Adrenal gland (tissue), 19 donors: ENCODE measurements at regions of chr3 and their contacts with region 1.

Region 1: DNA sequence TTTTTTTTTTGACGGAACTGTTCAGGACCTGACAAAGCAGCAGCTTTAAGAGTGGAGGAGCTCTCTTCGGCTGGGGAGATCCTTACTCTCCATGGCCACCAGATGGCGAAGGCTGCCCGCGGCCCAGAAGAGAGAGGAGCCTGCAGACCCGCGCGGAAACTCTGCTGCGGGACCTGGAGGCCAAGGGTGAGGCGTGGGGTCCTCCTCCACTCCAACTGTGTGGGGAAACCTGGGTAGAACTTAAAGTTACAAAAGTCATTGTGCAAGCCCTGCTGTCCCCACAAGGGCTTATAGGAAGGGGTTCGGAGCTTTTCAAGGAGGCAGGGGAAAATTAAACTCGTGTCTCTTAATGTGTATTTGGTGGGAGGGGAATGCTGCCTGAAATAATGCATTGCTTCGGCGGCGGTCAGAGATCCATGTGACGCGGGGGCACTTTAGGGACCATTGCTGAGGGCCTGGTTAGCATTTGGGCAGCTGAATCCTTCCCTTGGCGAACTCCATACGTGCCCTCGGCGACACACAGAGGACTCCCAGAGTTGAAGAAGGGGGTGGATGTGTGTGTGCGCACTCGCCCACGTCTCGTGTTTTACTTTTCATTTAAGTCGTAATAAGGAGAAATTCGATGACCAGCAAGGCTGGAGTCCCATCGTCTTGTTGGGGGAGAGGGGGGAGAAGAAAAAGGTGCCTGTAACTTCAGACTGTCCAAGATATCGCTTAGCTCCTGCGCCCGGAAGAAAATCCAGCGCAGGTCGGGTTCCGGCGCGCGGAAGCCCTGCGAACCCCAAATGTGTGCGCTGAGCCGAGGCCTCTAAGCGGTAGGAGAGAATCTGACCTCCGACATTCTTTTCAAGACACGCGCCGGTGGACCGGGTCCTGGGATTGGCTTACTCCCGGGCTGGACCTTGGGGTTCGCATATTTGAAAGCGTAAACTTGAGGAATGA is 9.7 kb downstream of the EOMES start:
- DNase-seq: peak; percentile 74 to 86 (median 79)
- H3K4me3 ChIP-seq: peak overlapping the region in 3 of 4 donors; percentile 28 to 59 (median 28)
- H3K27ac ChIP-seq: no peak overlapping the region
- H3K4me1 ChIP-seq: peaks cover 12% of the 10 kb centered on the region in 2 donors
- H3K27me3 ChIP-seq: peaks cover 32% of the 10 kb centered on the region
- CTCF ChIP-seq: peak; percentile 60 to 83 (median 72)
- POLR2A ChIP-seq: no peak

Region 2: DNA sequence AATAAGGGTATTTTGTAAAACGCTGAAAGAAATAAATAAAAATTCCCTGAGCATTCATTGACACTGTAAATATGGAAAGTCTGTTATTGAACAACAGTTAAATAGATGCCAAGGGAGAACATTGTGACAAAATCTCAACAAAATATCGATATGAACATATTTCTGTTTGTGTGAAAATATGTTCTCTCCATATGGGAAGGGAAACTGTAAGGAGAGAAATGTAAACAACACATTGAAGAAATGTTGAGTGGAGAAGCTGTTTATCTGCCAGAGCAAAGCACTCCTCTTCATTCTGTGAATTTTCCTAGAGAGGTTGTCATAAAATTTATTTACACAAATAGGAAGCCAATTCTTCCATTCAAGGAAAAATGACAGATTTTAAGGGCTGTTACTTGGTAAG is 66.8 kb after region 1 on chr3:
- intact Hi-C with region 1: no loop called
- DNase-seq: no peak
- H3K4me3 ChIP-seq: no peak overlapping the region
- H3K27ac ChIP-seq: no peak overlapping the region
- H3K4me1 ChIP-seq: no peaks in the 10 kb centered on the region
- H3K27me3 ChIP-seq: no peaks in the 10 kb centered on the region
- CTCF ChIP-seq: no peak
- POLR2A ChIP-seq: no peak

Region 3: DNA sequence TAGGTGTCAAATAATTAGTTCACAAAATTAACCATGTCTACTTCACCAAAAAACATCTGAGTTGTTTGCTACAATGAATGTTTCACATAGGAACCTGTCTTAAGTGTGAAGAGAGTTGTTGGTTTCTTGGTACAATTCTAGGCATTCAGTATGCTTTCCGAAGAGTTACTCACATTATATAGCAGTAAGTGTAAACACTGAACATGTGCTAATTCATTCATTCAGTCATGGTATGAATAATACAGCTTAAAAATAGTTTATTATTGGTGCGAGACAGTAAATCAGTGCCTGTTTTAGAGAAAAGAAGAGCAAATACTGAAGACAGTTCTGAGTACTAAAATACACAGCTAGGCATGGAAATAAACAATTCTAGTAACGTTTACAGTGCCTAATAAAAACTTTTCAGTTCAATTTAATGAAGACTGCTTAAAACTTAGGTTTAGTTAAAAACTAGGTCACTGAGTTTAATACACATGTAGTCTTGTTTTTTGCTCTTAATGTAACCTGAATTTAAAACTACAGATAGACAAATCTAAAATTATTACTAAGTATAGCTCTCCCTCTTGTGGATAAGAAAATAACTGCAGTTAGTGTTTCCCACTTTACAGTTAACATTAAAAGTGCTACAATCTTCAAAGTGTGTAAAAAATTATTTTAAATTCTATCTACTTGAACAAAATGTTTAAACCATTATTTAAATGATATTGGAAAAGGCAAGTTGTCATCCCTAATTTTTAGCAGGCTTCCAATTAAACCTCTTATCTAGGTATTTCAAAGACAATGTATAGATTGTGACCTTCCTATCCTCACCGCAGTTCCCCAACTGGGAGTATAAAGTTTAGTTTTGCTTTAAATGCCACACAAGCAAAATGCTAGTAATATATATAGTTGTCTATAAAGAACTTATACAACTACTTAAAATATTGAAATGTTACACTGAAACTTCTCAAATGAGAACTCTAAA is 616.1 kb after region 1 on chr3:
- intact Hi-C with region 1: loop called (anchors 5 kb)
- DNase-seq: no peak
- H3K4me3 ChIP-seq: no peak overlapping the region
- H3K27ac ChIP-seq: no peak overlapping the region
- H3K4me1 ChIP-seq: no peaks in the 10 kb centered on the region
- H3K27me3 ChIP-seq: no peaks in the 10 kb centered on the region
- CTCF ChIP-seq: peak; percentile 50 to 83 (median 75)
- POLR2A ChIP-seq: no peak

Region 4: DNA sequence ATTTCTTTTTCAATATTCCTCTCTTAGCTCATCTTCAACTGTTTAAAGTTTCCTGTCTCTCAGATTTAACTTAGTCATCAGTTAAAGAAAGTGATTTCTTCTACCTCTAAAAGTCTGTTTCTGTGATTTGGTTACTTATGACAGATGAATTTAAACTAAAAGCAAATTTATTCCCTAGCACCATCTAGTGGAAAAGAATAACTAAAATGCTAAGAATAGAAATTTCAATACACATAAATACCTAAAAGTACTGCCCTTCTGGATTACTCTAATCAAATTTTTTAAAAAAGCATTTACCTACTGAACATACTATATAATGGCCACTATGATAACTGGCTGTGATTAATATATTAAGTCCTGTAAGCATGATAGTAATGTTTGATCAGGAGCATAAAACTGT is 622.1 kb after region 1 on chr3:
- intact Hi-C with region 1: loop called (anchors 5 kb)
- DNase-seq: no peak
- H3K4me3 ChIP-seq: no peak overlapping the region
- H3K27ac ChIP-seq: no peak overlapping the region
- H3K4me1 ChIP-seq: no peaks in the 10 kb centered on the region
- H3K27me3 ChIP-seq: no peaks in the 10 kb centered on the region
- CTCF ChIP-seq: peak in 1 of 6 experiments; percentile 25
- POLR2A ChIP-seq: no peak